Cardiac septum (tissue), 1 donor: ENCODE measurements at regions of chr14 and their contacts with region 1.

Region 1: DNA sequence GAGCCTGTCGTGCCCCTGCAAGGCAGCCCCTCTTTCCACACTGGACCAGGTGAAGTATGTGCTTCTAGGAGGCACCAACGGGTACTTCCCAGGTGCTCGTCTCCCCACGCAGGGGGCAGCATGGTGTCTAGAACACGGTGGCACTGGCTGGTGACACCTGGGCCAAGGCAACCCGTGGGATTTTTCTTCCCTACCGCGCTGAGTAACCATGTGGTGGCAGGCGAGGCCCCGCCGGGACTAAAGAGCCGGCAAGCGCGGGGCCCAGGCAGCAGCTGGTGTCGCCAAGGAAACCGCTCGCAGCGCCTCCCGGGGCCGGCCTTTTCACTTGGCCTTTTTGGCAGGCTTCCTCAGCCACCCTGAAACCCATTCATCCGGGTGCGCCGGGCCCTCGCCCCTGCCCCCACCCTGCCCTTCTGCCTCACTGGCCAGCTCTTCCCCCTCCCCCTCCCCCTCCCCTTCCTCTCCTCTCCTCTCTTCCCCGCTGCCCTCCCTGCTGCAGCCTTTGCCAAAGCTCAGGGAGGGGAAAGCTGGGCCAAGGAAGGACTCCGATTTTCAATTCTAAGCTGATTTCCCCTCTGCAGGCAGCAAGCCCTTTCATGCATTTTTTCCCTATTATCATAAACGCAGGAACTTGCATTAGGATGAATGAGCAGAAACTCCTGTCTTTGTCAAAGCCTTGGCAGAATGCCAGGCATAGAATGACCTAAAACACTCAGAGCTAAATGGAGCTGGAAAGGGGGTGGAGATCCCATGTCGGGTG is 81.2 kb downstream of the IRF2BPL start:
- DNase-seq: peak; percentile 93

Region 2: GRCh38 chr14:76710056-76711010 is 236.9 kb before region 1 on chr14:
- intact Hi-C with region 1: no loop called
- DNase-seq: no peak

Region 3: DNA sequence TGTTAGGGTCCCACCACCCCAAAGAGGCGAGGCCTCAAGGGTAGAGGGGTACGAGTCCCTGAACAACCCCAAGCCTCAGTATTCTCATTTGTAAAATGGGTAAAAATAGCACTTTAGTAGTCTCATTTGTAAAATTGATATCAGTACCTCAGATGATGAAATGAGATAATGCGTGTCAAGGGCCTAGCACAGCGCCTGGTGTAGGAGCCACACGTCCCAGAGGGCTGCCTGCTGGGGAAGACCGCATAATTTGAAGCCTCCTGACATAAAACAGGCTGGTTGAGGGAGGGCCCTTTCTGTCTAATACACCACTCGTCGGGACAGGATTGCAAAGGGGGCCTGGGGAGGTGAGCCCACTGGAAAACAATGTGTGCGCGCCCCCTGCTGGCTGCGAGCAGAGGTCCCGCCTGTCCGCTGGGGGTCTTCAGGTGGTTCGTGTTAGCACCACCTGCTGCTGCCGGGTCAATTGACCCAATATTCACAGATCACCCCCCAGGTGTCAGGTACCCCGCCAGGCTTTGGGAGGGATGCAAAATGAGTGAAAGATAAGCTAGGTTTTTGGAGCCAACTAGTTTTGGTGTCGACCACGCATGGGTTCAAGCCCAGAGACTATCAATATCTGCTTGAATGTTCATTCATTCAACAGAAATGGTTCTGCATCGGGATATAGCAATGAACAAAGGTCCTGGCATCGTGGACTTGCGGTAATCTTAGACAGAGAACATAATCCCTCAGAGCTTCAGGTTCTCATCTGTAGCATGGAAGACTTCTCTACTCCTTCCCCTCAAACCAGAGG is 106.0 kb after region 1 on chr14:
- intact Hi-C with region 1: loop called (anchors 2 kb)
- DNase-seq: peak; percentile 85